HEK293 (cell line): ENCODE measurements at regions of chr16 and their contacts with region 1.

Region 1: GRCh38 chr16:19502395-19503131 is 19.3 kb downstream of the GDE1 start:
- H3K4me3 ChIP-seq: no peak overlapping the region
- H3K27ac ChIP-seq: no peak overlapping the region
- H3K4me1 ChIP-seq: no peaks in the 10 kb centered on the region
- CTCF ChIP-seq: peak; percentile 35; the same call in 1 of the 2 replicates

Region 2: DNA sequence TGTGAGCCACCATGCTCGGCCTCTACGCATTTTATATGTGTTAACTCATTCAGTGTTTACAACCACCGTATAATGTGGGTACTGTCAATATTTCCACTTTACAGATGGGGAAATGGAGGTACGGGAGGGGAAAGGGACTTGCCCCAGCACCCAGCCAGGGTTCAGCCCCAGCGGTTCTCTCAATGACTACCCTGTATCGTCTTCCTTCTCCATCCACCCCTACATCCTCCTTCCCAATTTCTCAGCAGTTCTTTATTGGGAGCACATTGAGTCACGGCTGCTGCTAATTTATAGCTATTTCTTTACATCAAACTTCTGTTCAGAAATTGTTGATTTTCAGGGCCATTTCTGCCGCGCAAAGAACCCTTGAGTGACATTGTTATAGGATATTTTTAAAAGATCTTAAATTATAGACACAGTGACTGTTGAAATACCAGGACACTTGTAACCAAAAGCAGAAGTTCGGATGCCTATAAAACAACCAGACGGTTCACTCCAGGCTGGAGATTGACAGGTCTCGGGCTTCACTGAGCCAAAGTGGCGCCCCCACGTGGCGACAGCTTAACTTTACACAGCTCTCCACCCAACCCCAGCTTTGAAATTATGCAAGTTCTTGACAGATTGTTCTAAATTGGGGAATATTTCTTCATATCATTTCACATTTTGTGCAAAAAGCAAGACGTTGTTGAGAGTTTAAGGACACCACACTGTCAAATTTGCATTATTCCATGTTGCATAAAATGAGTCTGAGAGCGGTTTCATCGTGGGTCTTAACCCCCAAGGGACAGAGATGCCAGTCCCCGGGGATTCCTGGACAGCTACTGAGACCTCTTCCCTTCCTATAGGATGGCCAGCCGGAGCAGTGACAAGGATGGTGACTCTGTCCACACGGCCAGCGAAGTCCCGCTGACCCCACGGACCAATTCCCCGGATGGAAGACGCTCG is 322.7 kb before region 1 on chr16:
- CTCF ChIA-PET with region 1: interaction called, 18 read pairs
- POLR2A ChIA-PET with region 1: no interaction called
- H3K4me3 ChIP-seq: no peak overlapping the region
- H3K27ac ChIP-seq: no peak overlapping the region
- H3K4me1 ChIP-seq: no peaks in the 10 kb centered on the region
- CTCF ChIP-seq: no peak

Region 3: GRCh38 chr16:19382887-19383816 is 119.4 kb before region 1 on chr16:
- CTCF ChIA-PET with region 1: interaction called, 49 read pairs
- POLR2A ChIA-PET with region 1: no interaction called
- H3K4me3 ChIP-seq: no peak overlapping the region
- H3K27ac ChIP-seq: no peak overlapping the region
- H3K4me1 ChIP-seq: peaks cover 11% of the 10 kb centered on the region
- CTCF ChIP-seq: no peak

Region 4: DNA sequence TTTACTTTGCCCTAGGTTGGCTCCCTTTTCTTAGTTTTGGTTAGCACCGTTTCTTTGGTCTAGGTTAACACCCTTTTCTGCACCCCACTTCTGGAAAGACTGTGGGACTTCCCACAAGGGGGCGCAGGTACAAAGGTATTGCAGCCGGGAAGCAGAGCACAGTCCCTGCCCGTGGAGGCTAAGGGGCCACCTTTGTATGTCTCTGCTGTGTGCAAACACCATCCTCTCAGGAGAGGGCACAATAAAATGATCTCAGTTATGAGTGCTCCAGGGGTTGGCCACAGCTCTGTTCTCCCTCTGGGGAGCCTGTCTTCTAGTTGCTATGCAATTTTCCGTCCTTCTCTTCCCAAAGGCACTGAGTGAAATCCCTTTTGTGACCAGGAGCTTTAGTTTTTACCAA is 113.3 kb before region 1 on chr16:
- CTCF ChIA-PET with region 1: interaction called, 49 read pairs
- POLR2A ChIA-PET with region 1: no interaction called
- H3K4me3 ChIP-seq: no peak overlapping the region
- H3K27ac ChIP-seq: no peak overlapping the region
- H3K4me1 ChIP-seq: peaks cover 3% of the 10 kb centered on the region
- CTCF ChIP-seq: peak; percentile 64

Region 5: GRCh38 chr16:19400697-19401096 is 101.9 kb before region 1 on chr16:
- CTCF ChIA-PET with region 1: interaction called, 22 read pairs
- POLR2A ChIA-PET with region 1: no interaction called
- H3K4me3 ChIP-seq: no peak overlapping the region
- H3K27ac ChIP-seq: no peak overlapping the region
- H3K4me1 ChIP-seq: no peaks in the 10 kb centered on the region; the same call in 1 of the 2 replicates
- CTCF ChIP-seq: no peak

Region 6: GRCh38 chr16:19463487-19463886 is 39.1 kb before region 1 on chr16:
- CTCF ChIA-PET with region 1: no interaction called
- POLR2A ChIA-PET with region 1: no interaction called
- H3K4me3 ChIP-seq: no peak overlapping the region
- H3K27ac ChIP-seq: no peak overlapping the region
- H3K4me1 ChIP-seq: no peaks in the 10 kb centered on the region
- CTCF ChIP-seq: no peak

Region 7: GRCh38 chr16:19490619-19491018 is 11.9 kb before region 1 on chr16:
- CTCF ChIA-PET with region 1: interaction called, 14 read pairs
- POLR2A ChIA-PET with region 1: no interaction called
- H3K4me3 ChIP-seq: no peak overlapping the region
- H3K27ac ChIP-seq: no peak overlapping the region
- H3K4me1 ChIP-seq: no peaks in the 10 kb centered on the region
- CTCF ChIP-seq: no peak

Region 8: DNA sequence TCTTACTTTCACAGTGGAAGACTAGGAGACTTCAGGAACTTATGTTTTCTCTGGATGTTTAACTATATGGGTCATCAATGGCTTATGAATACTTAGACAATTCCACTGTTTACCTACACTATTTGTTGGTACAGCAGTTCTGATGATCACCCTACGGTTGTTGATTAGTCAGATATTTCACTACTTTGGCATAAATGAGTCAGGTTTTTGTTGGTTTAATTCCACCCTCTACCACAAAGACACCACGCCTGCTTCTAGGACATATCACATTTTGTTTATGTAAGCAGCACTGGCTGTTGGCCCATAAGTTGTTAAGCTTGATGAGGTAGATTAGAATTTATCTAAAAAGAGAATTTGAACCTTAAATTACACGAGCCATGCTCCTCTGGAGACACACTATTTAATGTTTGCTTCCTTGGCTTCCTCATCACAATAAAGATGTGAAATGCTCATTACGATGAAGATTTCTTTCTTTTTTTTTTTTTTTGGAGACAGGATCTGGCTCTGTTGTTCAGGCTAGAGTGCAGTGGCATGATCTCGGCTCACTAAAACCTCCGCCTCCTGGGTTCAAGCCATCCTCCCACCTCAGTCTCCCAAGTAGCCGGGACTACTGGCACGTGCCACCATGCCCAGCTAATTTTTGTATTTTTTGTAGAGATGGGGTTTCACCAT is 15.0 kb after region 1 on chr16:
- CTCF ChIA-PET with region 1: interaction called, 14 read pairs
- POLR2A ChIA-PET with region 1: no interaction called
- H3K4me3 ChIP-seq: no peak overlapping the region
- H3K27ac ChIP-seq: no peak overlapping the region
- H3K4me1 ChIP-seq: peaks cover 14% of the 10 kb centered on the region
- CTCF ChIP-seq: no peak

Region 9: GRCh38 chr16:19549673-19550072 is 47.1 kb after region 1 on chr16:
- CTCF ChIA-PET with region 1: no interaction called
- POLR2A ChIA-PET with region 1: no interaction called
- H3K4me3 ChIP-seq: no peak overlapping the region
- H3K27ac ChIP-seq: no peak overlapping the region
- H3K4me1 ChIP-seq: no peaks in the 10 kb centered on the region
- CTCF ChIP-seq: no peak